ENCODE measurements at regions of chr6 and their contacts with region 1.

Region 1: DNA sequence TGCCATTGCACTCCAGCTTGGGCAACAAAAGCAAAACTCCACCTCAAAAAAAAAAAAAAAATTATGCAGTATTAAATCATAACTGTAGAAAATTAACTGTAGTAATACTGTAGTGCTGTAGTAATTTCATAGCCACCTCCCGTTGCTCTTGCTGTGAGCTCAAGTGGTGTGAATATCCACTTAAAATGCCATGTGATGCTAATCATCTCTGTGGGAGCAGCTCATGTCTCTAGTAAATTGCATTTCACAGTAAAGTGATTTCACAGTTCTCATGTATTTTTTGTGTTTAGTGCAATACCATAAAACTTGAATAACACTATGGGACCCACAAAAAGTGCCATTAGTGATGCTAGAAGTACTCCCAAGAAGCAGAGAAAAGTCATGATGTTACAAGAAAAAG is 14.4 kb upstream of the FAM217A start:
- DNase-seq: no peak
- ATAC-seq: no peak
- H3K4me3 ChIP-seq: no peak overlapping the region
- H3K27ac ChIP-seq: no peak overlapping the region
- H3K4me1 ChIP-seq: no peaks in the 10 kb centered on the region; a peak in 1 of 5 replicates
- H3K27me3 ChIP-seq: peaks cover 5 to 16% of the 10 kb centered on the region in 2 experiments; a peak in 4 of 5 replicates
- CTCF ChIP-seq: no peak
- EP300 ChIP-seq: no peak
- POLR2A ChIP-seq: no peak
- RAD21 ChIP-seq: no peak

Region 2: DNA sequence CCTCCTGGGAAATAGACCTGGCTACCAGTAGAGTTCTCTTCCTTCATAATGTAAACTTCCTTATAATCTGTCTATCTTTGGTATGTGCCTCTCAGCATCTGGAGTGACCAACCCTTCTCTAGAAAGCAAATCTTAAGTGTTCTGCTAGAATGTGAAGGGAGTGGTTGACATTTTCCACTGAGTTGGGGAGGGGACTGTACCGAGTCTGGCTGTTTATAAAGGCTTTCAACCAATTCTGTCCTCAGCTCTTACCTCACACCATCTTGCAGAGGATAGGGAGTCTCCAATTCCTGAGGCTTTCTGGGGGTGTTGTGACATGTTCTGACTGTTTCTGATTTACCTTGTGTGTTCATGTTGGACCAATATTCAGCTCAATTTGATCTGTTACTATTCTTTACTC is 53.9 kb before region 1 on chr6:
- CTCF ChIA-PET with region 1: no interaction called
- POLR2A ChIA-PET with region 1: no interaction called
- in situ Hi-C with region 1: no loop called
- intact Hi-C with region 1: no loop called
- DNase-seq: no peak
- ATAC-seq: no peak
- H3K4me3 ChIP-seq: no peak overlapping the region
- H3K27ac ChIP-seq: no peak overlapping the region
- H3K4me1 ChIP-seq: no peaks in the 10 kb centered on the region
- H3K27me3 ChIP-seq: no peaks in the 10 kb centered on the region
- CTCF ChIP-seq: no peak
- EP300 ChIP-seq: no peak
- POLR2A ChIP-seq: no peak
- RAD21 ChIP-seq: no peak

Region 3: DNA sequence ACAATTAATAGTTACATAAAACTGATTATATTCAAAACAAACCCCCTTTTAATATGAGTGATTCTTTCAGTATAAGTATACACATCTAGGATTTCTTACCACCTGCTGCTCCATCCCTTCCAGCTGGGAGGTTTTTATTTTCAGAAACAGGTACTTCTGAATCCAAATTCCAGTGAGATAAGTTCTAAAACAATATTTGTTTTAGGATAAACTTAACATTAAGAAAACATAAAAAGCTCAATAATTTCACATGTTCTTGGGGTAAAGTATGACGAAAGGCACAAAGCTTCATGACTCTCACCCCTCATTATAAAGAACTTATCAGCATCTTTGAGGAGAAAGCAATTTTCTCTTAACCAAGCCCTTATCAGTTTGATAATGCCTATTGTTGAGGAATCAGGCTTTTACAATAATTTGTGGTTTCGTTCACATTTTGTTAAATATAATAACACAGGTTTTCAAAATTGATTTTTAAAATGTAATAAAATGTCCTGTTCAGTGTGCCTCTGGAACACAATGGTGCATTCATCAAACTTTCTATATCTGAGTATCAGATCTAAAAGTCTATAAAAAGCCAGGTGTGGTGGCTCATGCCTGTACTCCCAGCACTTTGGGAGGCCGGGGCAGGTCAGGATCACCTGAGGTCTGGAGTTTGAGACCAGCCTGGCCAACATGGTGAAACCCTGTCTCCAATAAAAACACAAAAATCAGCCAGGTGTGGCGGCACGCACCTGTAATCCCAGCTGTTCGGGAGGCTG is 18.6 kb before region 1 on chr6:
- CTCF ChIA-PET with region 1: no interaction called
- POLR2A ChIA-PET with region 1: interaction called, 3 read pairs
- in situ Hi-C with region 1: no loop called
- intact Hi-C with region 1: loop called (anchors 1 kb)
- DNase-seq: no peak
- ATAC-seq: no peak
- H3K4me3 ChIP-seq: no peak overlapping the region
- H3K27ac ChIP-seq: no peak overlapping the region
- H3K4me1 ChIP-seq: no peaks in the 10 kb centered on the region
- H3K27me3 ChIP-seq: no peaks in the 10 kb centered on the region
- CTCF ChIP-seq: no peak
- EP300 ChIP-seq: no peak
- POLR2A ChIP-seq: no peak
- RAD21 ChIP-seq: no peak

Region 4: GRCh38 chr6:4844108-4844507 is 750.8 kb after region 1 on chr6:
- CTCF ChIA-PET with region 1: no interaction called
- POLR2A ChIA-PET with region 1: no interaction called
- in situ Hi-C with region 1: no loop called
- intact Hi-C with region 1: no loop called
- DNase-seq: no peak
- ATAC-seq: no peak
- H3K4me3 ChIP-seq: no peak overlapping the region
- H3K27ac ChIP-seq: no peak overlapping the region
- H3K4me1 ChIP-seq: peaks cover 0 to 11% of the 10 kb centered on the region in 2 experiments; a peak in 3 of 5 replicates
- H3K27me3 ChIP-seq: no peaks in the 10 kb centered on the region
- CTCF ChIP-seq: peak; percentile 33 to 74 (median 53)
- EP300 ChIP-seq: no peak
- POLR2A ChIP-seq: no peak
- RAD21 ChIP-seq: no peak